ENCODE measurements at regions of chr17 and their contacts with region 1.

Region 1: DNA sequence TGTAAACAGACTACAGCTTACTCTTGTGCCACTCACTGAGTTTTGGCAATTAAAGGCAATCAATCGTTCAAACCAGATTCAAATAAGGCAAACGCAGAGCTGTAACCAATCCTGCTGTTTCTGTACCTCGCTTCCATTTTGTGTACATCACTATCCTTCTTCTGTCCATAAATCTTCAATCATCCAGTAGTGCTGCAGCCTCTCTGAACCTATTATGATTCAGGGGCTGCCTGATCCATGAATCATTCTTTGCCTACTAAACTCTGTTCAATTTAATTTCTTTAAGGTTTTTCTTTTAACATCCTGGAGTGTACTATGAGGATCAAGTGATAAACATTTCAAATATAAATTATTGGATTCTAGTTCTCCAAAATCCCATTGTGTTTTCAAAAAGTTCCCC is 93.9 kb downstream of the CEP112 start:
- DNase-seq: no peak
- ATAC-seq: no peak
- H3K4me3 ChIP-seq: no peak overlapping the region
- H3K4me3 Mint-ChIP-seq: no peak overlapping the region
- H3K27ac ChIP-seq: no peak overlapping the region
- H3K27ac Mint-ChIP-seq: no peak overlapping the region
- H3K4me1 ChIP-seq: no peaks in the 10 kb centered on the region
- H3K4me1 Mint-ChIP-seq: no peaks in the 10 kb centered on the region
- H3K27me3 ChIP-seq: no peaks in the 10 kb centered on the region
- H3K27me3 Mint-ChIP-seq: no peaks in the 10 kb centered on the region

Region 2: GRCh38 chr17:66115246-66115645 is 17.2 kb after region 1 on chr17:
- CTCF ChIA-PET with region 1: no interaction called
- POLR2A ChIA-PET with region 1: interaction called in 1 of 2 experiments, 13 read pairs
- DNase-seq: no peak
- ATAC-seq: no peak
- H3K4me3 ChIP-seq: no peak overlapping the region
- H3K4me3 Mint-ChIP-seq: no peak overlapping the region
- H3K27ac ChIP-seq: no peak overlapping the region
- H3K27ac Mint-ChIP-seq: no peak overlapping the region
- H3K4me1 ChIP-seq: no peaks in the 10 kb centered on the region
- H3K4me1 Mint-ChIP-seq: no peaks in the 10 kb centered on the region
- H3K27me3 ChIP-seq: no peaks in the 10 kb centered on the region
- H3K27me3 Mint-ChIP-seq: peaks cover 0 to 8% of the 10 kb centered on the region in 2 donors